ENCODE measurements at regions of chr22 and their contacts with region 1.

Region 1: GRCh38 chr22:45994491-45995404 is 17.8 kb upstream of the WNT7B start:
- DNase-seq: peak; percentile 55
- H3K4me3 ChIP-seq: no peak overlapping the region
- H3K27ac ChIP-seq: no peak overlapping the region
- H3K4me1 ChIP-seq: peaks cover 31% of the 10 kb centered on the region
- H3K27me3 ChIP-seq: no peaks in the 10 kb centered on the region
- CTCF ChIP-seq: peak; percentile 91 to 95
- POLR2A ChIP-seq: no peak

Region 2: DNA sequence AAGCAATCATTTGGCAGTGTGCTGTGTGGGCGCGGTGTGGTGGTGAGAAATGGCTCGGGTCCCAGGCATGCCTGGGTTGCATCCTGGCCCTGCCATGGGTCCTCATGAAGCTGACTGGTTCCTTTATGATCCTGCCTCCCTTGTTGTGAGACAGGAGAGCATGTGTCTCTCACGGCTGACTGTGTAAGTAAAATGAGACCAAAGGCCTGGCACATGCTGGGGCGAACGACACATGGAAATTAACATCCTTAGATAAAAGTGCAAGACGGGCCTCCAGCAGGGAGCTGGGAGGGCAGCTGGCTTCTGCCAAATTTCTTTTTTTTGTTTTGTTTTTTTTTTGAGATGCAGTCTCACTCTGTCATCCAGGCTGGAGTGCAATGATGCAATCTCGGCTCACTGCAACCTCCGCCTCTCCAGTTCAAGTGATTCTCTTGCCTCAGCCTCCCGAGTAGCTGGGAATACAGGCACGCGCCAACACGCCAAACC is 501.4 kb before region 1 on chr22:
- CTCF ChIA-PET with region 1: no interaction called
- POLR2A ChIA-PET with region 1: no interaction called
- dilution Hi-C with region 1: no loop called
- intact Hi-C with region 1: no loop called
- DNase-seq: no peak
- H3K4me3 ChIP-seq: no peak overlapping the region
- H3K27ac ChIP-seq: no peak overlapping the region
- H3K4me1 ChIP-seq: no peaks in the 10 kb centered on the region
- H3K27me3 ChIP-seq: peaks cover 0 to under 1% of the 10 kb centered on the region in 2 experiments
- CTCF ChIP-seq: no peak
- POLR2A ChIP-seq: no peak

Region 3: DNA sequence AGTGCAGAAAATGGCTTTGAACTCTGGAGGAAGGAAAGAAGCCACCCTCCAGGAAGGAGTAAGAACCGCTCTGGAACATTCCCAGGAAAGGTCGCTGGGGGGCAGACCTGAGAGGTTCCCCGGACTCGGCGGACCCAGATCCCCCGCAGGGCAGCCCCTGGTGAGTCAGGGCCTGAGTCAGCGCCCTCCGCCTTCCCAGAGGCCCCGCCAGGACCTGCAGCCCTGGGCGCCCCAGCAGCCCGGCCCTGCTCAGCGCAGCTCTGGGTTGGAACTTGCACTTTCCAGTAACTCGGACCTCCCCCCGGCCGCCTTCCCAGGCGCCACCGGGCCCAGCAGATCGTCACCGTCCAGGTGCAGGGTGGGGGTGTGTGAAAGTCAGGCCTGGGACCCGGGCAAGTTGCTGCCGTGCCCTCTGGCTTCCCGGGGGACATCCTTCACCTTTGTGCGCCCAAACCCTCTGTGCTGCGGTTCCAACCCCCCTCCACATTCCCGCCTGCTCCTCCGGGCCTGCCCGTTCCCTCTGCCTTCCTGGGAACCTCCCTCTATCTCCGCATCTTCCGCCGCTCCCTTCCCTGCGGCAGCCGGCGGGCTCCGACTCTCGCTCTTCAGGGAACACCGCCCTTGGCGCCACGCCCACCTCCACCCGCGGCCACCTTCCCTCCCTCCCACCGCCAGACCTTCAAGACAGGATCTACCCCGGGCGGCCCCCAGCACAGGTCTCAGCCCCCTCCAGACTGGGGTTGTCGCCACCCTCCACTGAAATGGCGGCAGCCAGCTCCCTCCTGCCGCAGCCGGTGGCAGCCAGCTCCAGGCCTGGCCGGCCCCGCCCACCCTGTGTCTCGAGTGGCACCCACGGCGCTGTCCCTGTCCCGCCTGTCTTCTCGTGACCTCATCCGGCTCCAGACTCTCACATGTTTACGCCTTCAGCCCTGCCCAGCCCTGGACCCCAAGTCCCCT is 19.0 kb after region 1 on chr22:
- CTCF ChIA-PET with region 1: interaction called, 194 read pairs
- POLR2A ChIA-PET with region 1: interaction called, 3 read pairs
- dilution Hi-C with region 1: no loop called
- intact Hi-C with region 1: loop called (anchors 2 kb)
- DNase-seq: peak; percentile 88
- H3K4me3 ChIP-seq: peak overlapping the region; percentile 46 to 66 (median 50)
- H3K27ac ChIP-seq: peak overlapping the region; percentile 87
- H3K4me1 ChIP-seq: peaks cover 8% of the 10 kb centered on the region
- H3K27me3 ChIP-seq: no peaks in the 10 kb centered on the region
- CTCF ChIP-seq: peak; percentile 77 to 86
- POLR2A ChIP-seq: peak; percentile 78

Region 4: DNA sequence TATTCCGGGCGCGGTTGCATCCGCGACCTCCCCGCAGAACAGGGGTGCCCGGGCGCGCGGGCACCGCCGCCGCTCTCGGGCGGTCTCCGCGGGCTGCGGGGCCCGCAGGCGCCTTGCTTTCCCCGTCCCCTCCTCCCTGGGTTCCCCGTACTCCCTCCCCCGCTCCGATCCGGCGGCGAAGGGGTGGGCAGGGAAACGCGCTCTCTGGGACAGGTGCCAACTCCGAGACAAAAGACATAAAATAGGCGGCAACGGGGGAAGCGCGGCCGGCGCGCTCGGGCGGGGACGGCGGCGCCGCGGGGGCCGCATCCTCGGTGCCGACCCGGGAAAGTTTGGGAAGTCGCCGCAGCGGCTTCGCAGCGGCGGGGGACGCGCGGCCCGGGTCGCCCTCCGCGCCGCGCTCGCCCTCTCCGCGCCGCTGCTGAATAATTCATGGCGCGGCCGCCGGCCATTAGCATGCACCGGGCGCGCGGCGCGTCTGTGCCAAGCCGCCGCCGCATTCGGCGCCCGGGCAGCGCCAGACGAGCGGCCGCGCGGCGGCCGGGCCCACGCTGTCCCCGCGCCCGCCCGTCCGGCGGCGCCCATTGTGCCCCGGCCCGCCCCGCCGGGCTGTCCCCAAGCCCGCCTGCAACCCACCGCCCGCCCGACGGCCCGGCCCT is 76.8 kb after region 1 on chr22:
- CTCF ChIA-PET with region 1: interaction called, 7 read pairs
- POLR2A ChIA-PET with region 1: no interaction called
- dilution Hi-C with region 1: no loop called
- intact Hi-C with region 1: loop called (anchors 1 kb)
- DNase-seq: peak; percentile 92
- H3K4me3 ChIP-seq: peak overlapping the region; percentile 64 to 88 (median 81)
- H3K27ac ChIP-seq: peak overlapping the region; percentile 68
- H3K4me1 ChIP-seq: peaks cover 53% of the 10 kb centered on the region
- H3K27me3 ChIP-seq: no peaks in the 10 kb centered on the region
- CTCF ChIP-seq: no peak
- POLR2A ChIP-seq: peak; percentile 91

Region 5: GRCh38 chr22:46116491-46116958 is 121.8 kb after region 1 on chr22:
- CTCF ChIA-PET with region 1: interaction called, 139 read pairs
- POLR2A ChIA-PET with region 1: interaction called, 7 read pairs
- dilution Hi-C with region 1: no loop called
- intact Hi-C with region 1: loop called (anchors 1 kb)
- DNase-seq: peak; percentile 85
- H3K4me3 ChIP-seq: no peak overlapping the region
- H3K27ac ChIP-seq: no peak overlapping the region
- H3K4me1 ChIP-seq: no peaks in the 10 kb centered on the region
- H3K27me3 ChIP-seq: no peaks in the 10 kb centered on the region
- CTCF ChIP-seq: peak; percentile 81 to 95
- POLR2A ChIP-seq: no peak

Region 6: GRCh38 chr22:46267431-46268279 is 272.9 kb after region 1 on chr22 and contains the start of gene TTC38:
- CTCF ChIA-PET with region 1: no interaction called
- POLR2A ChIA-PET with region 1: no interaction called
- dilution Hi-C with region 1: no loop called
- intact Hi-C with region 1: loop called (anchors 5 kb)
- DNase-seq: peak; percentile 81
- H3K4me3 ChIP-seq: peak within 1 kb of the TSS; percentile 47 to 76 (median 60)
- H3K27ac ChIP-seq: no peak within 1 kb of the TSS
- H3K4me1 ChIP-seq: peaks cover 20% of the 10 kb centered on the region
- H3K27me3 ChIP-seq: peaks cover 0 to 3% of the 10 kb centered on the region in 2 experiments
- CTCF ChIP-seq: no peak
- POLR2A ChIP-seq: peak; percentile 49
- total RNA-seq, gene TTC38: 33.1 and 39.7 TPM in 2 replicates

Region 7: DNA sequence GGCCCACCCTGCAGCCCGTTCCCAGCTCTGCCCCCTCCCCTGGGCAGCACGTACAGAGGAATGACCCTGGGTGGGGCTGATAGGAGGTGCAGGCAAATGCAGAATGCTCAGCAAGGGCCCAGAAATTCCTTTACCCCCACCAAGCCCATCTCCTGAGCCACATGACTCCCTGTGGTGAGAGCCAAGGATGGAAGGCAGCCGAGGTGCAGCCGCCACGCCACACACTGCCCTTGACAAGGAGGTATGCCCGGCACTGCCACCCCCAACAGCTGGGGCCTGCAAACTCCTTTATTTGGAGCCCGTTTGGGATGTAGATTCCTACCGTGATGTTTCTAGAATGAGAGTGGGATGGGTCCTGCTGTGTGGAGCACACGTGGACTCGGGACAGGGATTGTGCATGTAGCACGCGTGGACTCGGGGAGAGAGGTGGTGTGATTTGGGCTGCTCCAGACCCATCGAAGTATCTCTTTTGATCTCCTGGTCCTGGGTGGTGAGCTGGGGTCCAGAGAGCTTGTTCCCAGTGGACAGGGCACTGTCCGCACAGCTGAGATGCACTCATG is 314.9 kb after region 1 on chr22:
- CTCF ChIA-PET with region 1: interaction called, 4 read pairs
- POLR2A ChIA-PET with region 1: no interaction called
- dilution Hi-C with region 1: no loop called
- intact Hi-C with region 1: loop called (anchors 1 kb)
- DNase-seq: no peak
- H3K4me3 ChIP-seq: no peak overlapping the region
- H3K27ac ChIP-seq: no peak overlapping the region
- H3K4me1 ChIP-seq: no peaks in the 10 kb centered on the region
- H3K27me3 ChIP-seq: no peaks in the 10 kb centered on the region
- CTCF ChIP-seq: no peak
- POLR2A ChIP-seq: no peak

Measured in endothelial cell of umbilical vein (primary cell).